K562 (cell line): ENCODE measurements at regions of chr17 and their contacts with region 1.

Region 1: GRCh38 chr17:47615766-47616424 is 33.8 kb upstream of the KPNB1 start:
- DNase-seq: peak; percentile 27 to 64 (median 30)
- ATAC-seq: peak; percentile 84
- H3K4me3 ChIP-seq: no peak overlapping the region
- H3K27ac ChIP-seq: 0 out of 3 replicates have a peak overlapping the region, but pooled peaks have one; percentile 33
- H3K4me1 ChIP-seq: no peaks in the 10 kb centered on the region
- H3K27me3 ChIP-seq: no peaks in the 10 kb centered on the region
- CTCF ChIP-seq: peak; percentile 35 to 79 (median 63); a peak in 5 of 6 replicates
- EP300 ChIP-seq: no peak
- POLR2A ChIP-seq: no peak
- RAD21 ChIP-seq: peak; percentile 67 to 81

Region 2: DNA sequence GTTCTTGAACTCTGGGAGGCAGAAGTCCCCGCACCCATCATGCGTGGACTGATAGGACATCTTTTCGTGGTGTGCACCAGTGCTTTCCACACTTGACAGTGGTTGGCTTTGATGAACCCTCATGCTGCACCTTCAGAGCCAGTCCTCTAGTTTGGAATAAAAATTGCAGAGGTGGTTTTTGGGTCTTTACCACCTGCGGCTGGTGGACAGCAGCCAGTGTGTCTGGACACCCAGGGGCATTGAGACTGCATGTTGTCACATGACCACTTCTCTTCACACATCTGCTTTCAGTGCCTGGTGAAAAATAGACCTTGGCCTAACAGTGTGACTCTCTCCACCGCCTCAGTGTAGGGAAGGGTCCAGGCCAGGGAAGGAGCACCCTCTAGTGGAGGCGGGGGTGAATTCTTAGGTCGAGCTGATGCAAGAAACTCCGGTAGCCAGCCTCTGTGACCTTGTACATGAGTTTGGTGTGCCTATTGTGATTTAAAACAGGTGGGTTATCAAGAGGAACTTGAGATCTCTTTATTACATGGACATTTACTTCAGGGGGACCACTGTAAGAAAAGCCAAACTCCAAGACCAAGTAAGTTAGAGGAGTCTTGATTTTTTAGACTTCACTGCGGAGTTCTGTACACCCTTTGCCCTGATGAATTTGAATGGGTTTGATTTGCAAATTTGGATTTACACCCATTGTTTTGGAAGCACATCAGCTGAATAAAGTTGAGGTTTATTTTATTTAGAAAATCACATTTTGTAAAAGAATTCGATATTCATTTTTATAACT is 675.1 kb before region 1 on chr17:
- CTCF ChIA-PET with region 1: interaction called, 11 read pairs
- POLR2A ChIA-PET with region 1: interaction called, 4 read pairs
- in situ Hi-C with region 1: no loop called
- intact Hi-C with region 1: no loop called
- DNase-seq: peak; percentile 82 to 90 (median 83)
- ATAC-seq: peak; percentile 87
- H3K4me3 ChIP-seq: no peak overlapping the region
- H3K27ac ChIP-seq: no peak overlapping the region
- H3K4me1 ChIP-seq: peaks cover 19% of the 10 kb centered on the region in 2 experiments
- H3K27me3 ChIP-seq: no peaks in the 10 kb centered on the region
- CTCF ChIP-seq: peak; percentile 89 to 95 (median 95)
- EP300 ChIP-seq: no peak
- POLR2A ChIP-seq: peak; percentile 48; the same call in 1 of the 2 replicates
- RAD21 ChIP-seq: peak; percentile 82 to 95

Region 3: DNA sequence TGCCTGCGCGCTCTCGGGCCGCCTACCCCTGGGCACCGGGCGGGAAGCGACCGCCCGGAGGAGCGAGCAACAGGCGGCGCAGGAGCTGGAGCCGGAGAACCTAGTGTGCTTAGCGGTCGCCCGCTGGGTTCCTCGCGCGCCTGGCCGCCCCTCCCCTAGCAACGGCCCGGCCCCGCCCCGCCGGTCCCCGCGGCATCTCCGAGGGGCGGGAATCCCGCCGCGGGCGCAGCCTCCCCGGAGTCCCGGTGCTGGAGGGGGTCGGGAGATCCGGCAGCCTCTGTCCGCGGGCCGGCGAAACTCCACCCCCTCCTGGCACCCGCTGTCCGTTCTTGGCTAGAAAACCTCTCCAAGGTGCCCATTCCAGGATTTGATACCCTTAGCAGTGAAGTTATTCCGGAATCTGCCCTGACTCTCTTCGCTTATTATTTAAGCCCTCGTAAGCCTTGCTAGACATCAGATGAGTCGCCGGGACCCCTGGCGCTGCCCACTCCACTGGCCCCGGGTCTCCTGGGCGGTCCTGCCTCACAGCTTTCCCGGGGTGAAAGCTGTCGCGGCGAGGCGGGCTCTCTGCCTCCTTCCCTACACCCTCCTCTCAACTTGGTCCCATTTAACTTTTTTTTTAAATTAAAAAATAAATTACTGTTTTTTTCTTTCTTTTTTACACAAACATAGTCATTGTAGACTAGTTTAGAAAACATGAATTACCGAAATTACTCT is 636.6 kb before region 1 on chr17 and contains the start of gene RPRML:
- CTCF ChIA-PET with region 1: no interaction called
- POLR2A ChIA-PET with region 1: no interaction called
- in situ Hi-C with region 1: loop called (anchors 25 kb)
- intact Hi-C with region 1: no loop called
- DNase-seq: peak; percentile 34 to 77 (median 56)
- ATAC-seq: peak; percentile 52
- H3K4me3 ChIP-seq: peak within 1 kb of the TSS; percentile 28; the same call in 1 of the 2 replicates
- H3K27ac ChIP-seq: no peak within 1 kb of the TSS
- H3K4me1 ChIP-seq: peaks cover 10 to 30% of the 10 kb centered on the region in 2 experiments; a peak in 4 of 5 replicates
- H3K27me3 ChIP-seq: peaks cover 18 to 45% of the 10 kb centered on the region in 2 experiments; a peak in 4 of 5 replicates
- CTCF ChIP-seq: no peak
- EP300 ChIP-seq: no peak
- POLR2A ChIP-seq: no peak
- RAD21 ChIP-seq: no peak
- polyA plus RNA-seq, gene RPRML: not detected

Region 4: DNA sequence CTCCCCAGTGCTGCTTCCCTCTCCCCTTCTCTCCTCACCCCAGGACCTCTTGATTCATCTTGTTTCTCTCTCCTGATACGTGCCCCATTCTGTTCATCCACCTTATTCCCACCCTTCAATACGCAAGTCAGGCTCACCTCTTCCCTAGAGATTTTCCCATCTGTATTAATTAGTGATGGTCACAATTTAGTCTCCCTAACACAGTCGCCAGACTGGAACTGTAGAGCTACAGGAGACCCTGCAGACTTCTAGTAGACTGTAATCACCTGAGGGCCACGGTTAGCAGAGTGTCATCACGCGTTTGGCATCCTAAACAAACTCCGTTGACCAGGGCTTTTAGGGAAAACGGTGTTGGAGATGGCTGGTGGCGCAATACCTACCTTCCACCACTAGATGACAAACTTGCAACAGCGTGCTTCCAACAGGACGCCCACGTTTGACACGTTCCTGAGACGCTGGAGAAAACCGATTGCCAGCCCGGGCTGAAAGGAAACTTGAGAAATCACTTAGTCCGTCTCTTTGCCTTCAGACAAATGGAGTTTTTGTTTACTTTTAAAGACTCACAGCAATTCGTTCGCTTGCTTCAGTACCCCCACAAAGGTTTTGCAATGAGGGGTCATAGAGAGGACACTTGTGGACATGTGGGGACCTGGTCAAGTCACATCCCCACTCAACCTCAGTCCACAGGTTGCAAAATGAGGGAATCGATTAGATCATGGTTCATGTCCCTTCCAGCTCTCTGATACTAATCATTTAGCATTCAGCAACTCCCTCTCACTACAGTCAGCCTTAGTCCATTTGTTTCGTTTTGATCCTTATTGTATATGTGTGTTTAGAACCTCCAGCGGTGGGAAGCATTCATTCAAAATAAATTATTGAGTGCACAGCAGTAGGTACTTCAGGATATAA is 386.1 kb before region 1 on chr17:
- CTCF ChIA-PET with region 1: interaction called, 13 read pairs
- POLR2A ChIA-PET with region 1: no interaction called
- in situ Hi-C with region 1: loop called (anchors 10 kb)
- intact Hi-C with region 1: loop called (anchors 2 kb)
- DNase-seq: peak; percentile 81 to 94 (median 82)
- ATAC-seq: peak; percentile 93
- H3K4me3 ChIP-seq: no peak overlapping the region
- H3K27ac ChIP-seq: peak overlapping the region; percentile 35; the same call in 1 of the 3 replicates
- H3K4me1 ChIP-seq: peaks cover 7 to 29% of the 10 kb centered on the region in 2 experiments; a peak in 3 of 5 replicates
- H3K27me3 ChIP-seq: no peaks in the 10 kb centered on the region
- CTCF ChIP-seq: peak; percentile 95 to 99 (median 99)
- EP300 ChIP-seq: peak; percentile 30; the same call in 1 of the 2 replicates
- POLR2A ChIP-seq: no peak
- RAD21 ChIP-seq: peak; percentile 99 to 100

Region 5: DNA sequence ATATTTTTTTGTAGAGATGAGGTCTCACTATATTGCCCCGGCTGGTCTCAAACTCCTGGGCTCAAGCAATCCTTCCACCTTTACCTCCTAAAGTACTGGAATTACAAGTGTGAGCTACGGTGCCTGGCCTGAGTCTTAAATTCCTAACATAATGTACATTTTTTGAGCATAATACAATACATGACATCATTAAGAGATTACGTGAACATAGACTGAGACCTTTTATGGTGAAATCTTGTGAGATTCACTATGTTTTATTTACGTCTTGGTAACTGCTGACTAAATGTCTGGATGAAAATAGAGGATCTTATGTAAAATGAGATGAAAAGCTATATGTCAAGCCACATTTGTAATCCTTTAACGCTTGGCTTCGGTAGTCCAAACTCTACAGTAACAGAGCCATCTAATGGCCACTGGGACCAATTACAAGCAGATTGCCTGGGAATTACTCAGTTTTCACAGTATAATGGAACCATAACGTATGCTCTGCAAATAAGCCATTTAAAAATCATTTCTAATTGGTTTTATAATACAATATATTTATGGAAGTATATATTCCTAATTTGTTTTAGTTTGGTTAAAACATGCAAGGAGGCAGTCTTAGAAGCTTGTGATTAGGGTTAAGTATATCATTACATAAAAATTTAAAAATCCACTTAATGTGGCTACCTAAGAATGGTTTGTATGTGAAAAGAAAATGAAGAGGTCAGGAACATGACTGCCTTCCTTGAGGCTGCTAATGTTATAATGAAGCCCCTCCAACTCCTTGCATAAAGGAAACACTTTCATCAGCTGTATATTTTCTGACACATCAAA is 300.2 kb before region 1 on chr17:
- CTCF ChIA-PET with region 1: no interaction called
- POLR2A ChIA-PET with region 1: no interaction called
- in situ Hi-C with region 1: no loop called
- intact Hi-C with region 1: loop called (anchors 5 kb)
- DNase-seq: peak; percentile 55 to 80 (median 68)
- ATAC-seq: peak; percentile 94
- H3K4me3 ChIP-seq: no peak overlapping the region
- H3K27ac ChIP-seq: no peak overlapping the region
- H3K4me1 ChIP-seq: peaks cover 3 to 6% of the 10 kb centered on the region in 2 experiments; a peak in 2 of 5 replicates
- H3K27me3 ChIP-seq: no peaks in the 10 kb centered on the region
- CTCF ChIP-seq: peak; percentile 75 to 93 (median 81)
- EP300 ChIP-seq: no peak; the same call in 1 of the 2 replicates
- POLR2A ChIP-seq: no peak
- RAD21 ChIP-seq: peak; percentile 99 to 100

Region 6: GRCh38 chr17:47363171-47363570 is 252.7 kb before region 1 on chr17:
- CTCF ChIA-PET with region 1: no interaction called
- POLR2A ChIA-PET with region 1: no interaction called
- in situ Hi-C with region 1: loop called (anchors 5 kb)
- intact Hi-C with region 1: loop called (anchors 5 kb)
- DNase-seq: no peak
- ATAC-seq: no peak
- H3K4me3 ChIP-seq: no peak overlapping the region
- H3K27ac ChIP-seq: no peak overlapping the region
- H3K4me1 ChIP-seq: no peaks in the 10 kb centered on the region
- H3K27me3 ChIP-seq: no peaks in the 10 kb centered on the region
- CTCF ChIP-seq: no peak
- EP300 ChIP-seq: no peak
- POLR2A ChIP-seq: no peak
- RAD21 ChIP-seq: no peak

Region 7: GRCh38 chr17:47708863-47709541 is 93.1 kb after region 1 on chr17:
- CTCF ChIA-PET with region 1: no interaction called
- POLR2A ChIA-PET with region 1: no interaction called
- in situ Hi-C with region 1: no loop called
- intact Hi-C with region 1: no loop called
- DNase-seq: no peak
- ATAC-seq: no peak
- H3K4me3 ChIP-seq: no peak overlapping the region
- H3K27ac ChIP-seq: no peak overlapping the region
- H3K4me1 ChIP-seq: peaks cover 21 to 54% of the 10 kb centered on the region in 2 experiments
- H3K27me3 ChIP-seq: peaks cover 8 to 16% of the 10 kb centered on the region in 2 experiments; a peak in 4 of 5 replicates
- CTCF ChIP-seq: no peak
- EP300 ChIP-seq: no peak
- POLR2A ChIP-seq: no peak
- RAD21 ChIP-seq: no peak

Region 8: GRCh38 chr17:47733047-47733673 is 117.3 kb after region 1 on chr17 and contains the start of gene TBX21:
- CTCF ChIA-PET with region 1: no interaction called
- POLR2A ChIA-PET with region 1: no interaction called
- in situ Hi-C with region 1: no loop called
- intact Hi-C with region 1: no loop called
- DNase-seq: peak; percentile 84 to 89 (median 86)
- ATAC-seq: peak; percentile 98
- H3K4me3 ChIP-seq: no peak within 1 kb of the TSS
- H3K27ac ChIP-seq: no peak within 1 kb of the TSS
- H3K4me1 ChIP-seq: peaks cover 0 to 12% of the 10 kb centered on the region in 2 experiments; a peak in 2 of 5 replicates
- H3K27me3 ChIP-seq: peaks cover 17 to 54% of the 10 kb centered on the region in 2 experiments
- CTCF ChIP-seq: peak; percentile 26 to 78 (median 52); a peak in 4 of 6 replicates
- EP300 ChIP-seq: no peak
- POLR2A ChIP-seq: no peak
- RAD21 ChIP-seq: peak in 1 of 2 experiments; percentile 30; a peak in 2 of 4 replicates
- polyA plus RNA-seq, gene TBX21: not detected